ENCODE measurements at regions of chr10 and their contacts with region 1.

Region 1: DNA sequence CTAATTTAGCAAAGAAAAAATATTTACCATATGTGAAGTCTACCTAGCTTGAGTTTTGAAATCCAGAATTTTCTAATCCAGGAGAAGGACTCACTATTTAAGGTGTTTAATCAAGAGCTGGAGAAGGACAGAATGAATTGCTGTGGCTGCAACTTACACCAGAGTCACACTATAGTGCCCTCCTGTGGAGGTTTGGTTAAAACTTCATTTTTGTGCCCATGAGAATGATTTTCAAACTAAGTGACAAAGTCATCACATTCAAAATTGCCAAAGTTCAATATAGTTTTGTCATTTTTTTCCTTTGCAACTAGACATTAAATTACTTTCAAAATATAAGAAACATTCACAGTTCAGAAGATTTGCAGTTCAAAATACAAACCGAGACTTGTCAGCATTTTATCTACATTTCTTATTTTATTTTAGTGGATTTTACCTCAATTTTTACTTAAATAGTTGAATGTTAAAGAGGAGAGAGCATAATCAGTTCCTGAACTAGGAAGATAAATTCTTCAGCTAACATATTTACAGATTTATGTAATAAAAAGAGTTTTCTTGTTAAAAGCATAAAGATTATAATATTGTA is 70.7 kb downstream of the CABCOCO1 start:
- DNase-seq: peak; percentile 29
- H3K4me3 ChIP-seq: no peak overlapping the region
- H3K27ac ChIP-seq: peak overlapping the region in 1 of 2 experiments; percentile 58; a peak in 1 of 4 replicates
- H3K4me1 ChIP-seq: peaks cover 0 to 9% of the 10 kb centered on the region in 2 experiments; a peak in 1 of 4 replicates
- H3K27me3 ChIP-seq: no peaks in the 10 kb centered on the region
- CTCF ChIP-seq: peak; percentile 77
- EP300 ChIP-seq: no peak
- RAD21 ChIP-seq: peak; percentile 85

Region 2: DNA sequence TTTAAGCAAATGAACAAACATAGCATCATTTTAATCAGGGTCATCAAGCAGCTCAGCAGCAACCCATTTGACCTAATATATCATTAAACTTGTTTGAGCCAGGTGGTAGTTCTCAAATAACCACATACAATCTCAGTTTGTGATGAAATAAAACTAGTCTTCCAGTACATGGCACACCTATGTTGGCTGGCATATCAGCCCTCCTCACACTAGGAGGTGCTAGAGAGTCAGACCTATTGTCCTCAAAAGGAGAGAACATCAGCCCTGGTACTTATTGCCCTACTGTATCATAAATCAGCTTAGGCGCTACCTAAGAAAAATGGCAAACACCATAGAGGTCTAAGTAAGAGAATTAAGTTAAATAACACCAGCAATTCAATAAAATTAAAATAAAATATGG is 11.0 kb after region 1 on chr10:
- CTCF ChIA-PET with region 1: interaction called, 44 read pairs
- POLR2A ChIA-PET with region 1: no interaction called
- DNase-seq: no peak
- H3K4me3 ChIP-seq: no peak overlapping the region
- H3K27ac ChIP-seq: no peak overlapping the region
- H3K4me1 ChIP-seq: peaks cover 0 to 7% of the 10 kb centered on the region in 2 experiments; a peak in 3 of 4 replicates
- H3K27me3 ChIP-seq: no peaks in the 10 kb centered on the region
- CTCF ChIP-seq: peak; percentile 31; the same call in 1 of the 2 replicates
- EP300 ChIP-seq: no peak
- RAD21 ChIP-seq: no peak

Region 3: DNA sequence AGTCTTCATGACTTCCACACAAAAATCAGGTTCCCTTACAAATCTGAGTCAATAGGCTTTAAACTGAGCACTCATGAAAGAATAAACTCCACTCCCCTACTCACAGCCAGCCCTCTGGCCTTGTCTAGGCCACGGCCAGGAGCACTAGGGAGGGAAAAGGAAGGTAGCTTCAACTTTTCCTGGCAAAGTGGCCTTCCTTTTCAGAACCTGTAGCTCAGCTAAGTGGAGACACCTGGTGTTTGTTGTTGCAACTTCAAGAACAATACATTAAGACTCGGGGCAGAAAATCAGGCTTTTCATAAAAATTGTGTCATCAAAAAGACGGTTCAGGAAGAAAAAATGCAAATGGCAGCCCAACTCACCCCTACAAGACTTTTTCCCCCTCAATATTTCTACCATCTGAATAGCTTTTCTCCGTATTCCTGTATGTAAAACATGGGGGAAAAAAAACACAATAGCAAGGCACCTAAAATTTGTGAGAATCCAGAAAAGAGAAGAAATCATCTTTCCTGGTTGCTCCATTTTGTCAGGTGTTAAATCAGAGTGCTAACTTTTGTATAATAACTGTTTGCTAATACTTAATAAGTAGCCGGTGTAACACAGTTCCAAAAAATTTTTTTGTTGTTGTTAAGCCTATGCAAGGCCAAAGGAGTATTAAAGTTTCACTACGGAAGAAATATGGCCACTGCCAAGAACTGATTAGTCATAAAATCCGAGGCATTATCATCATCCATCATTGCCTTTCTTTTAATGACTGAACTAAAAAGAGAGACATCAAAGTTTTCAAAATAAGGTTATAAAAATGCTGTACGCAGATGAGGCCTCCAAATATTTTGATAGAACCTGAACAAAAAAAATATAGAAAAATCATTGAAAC is 101.9 kb after region 1 on chr10:
- CTCF ChIA-PET with region 1: interaction called, 13 read pairs
- POLR2A ChIA-PET with region 1: no interaction called
- DNase-seq: peak; percentile 15
- H3K4me3 ChIP-seq: peak overlapping the region in 1 of 2 experiments; percentile 39; a peak in 1 of 4 replicates
- H3K27ac ChIP-seq: peak overlapping the region; percentile 89 to 93
- H3K4me1 ChIP-seq: peaks cover 21 to 29% of the 10 kb centered on the region in 2 experiments
- H3K27me3 ChIP-seq: no peaks in the 10 kb centered on the region
- CTCF ChIP-seq: peak; percentile 69
- EP300 ChIP-seq: peak in 1 of 2 experiments; percentile 65; a peak in 2 of 4 replicates
- RAD21 ChIP-seq: peak; percentile 77

Measured in SK-N-SH (cell line).